ENCODE measurements at regions of chr11 and their contacts with region 1.

Region 1: DNA sequence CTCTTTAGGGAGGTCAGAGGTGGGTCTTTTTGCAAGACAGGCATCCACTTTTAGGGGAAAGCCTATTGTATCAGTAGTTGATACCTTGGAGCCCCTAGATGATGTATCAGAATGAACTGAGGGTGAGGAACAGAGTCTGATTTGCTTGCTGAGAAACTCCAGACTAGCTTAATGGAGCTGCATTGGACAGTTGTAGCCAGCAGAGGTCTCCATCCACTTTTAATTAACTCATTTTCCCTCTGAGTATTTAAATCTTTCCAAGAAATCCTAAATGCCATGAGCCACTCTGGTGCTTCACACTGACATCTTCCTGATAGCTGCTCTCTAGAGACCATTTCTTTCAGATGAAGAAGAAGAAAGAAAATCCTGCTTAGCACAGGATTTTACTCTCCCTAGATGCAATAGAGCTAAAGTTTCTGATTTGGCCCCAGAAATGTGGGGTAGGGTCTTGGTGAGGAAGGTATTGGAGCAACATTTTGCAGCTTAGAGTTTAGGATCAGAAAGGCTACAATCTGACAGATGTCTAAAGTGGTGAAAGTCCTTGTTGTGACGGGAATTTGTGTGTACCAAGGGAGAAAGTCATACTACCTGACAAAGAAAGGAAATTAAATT is 38.0 kb downstream of the EXT2 start:
- DNase-seq: no peak
- H3K4me3 ChIP-seq: no peak overlapping the region
- CTCF ChIP-seq: peak; percentile 54

Region 2: GRCh38 chr11:43992834-43993637 is 140.4 kb before region 1 on chr11:
- CTCF ChIA-PET with region 1: no interaction called
- POLR2A ChIA-PET with region 1: no interaction called
- DNase-seq: no peak
- H3K4me3 ChIP-seq: peak overlapping the region; percentile 8
- CTCF ChIP-seq: no peak

Region 3: GRCh38 chr11:44120169-44120568 is 13.3 kb before region 1 on chr11:
- CTCF ChIA-PET with region 1: interaction called, 53 read pairs
- POLR2A ChIA-PET with region 1: no interaction called
- DNase-seq: no peak
- H3K4me3 ChIP-seq: no peak overlapping the region
- CTCF ChIP-seq: peak; percentile 20

Region 4: GRCh38 chr11:44159848-44160721 is 26.6 kb after region 1 on chr11:
- CTCF ChIA-PET with region 1: interaction called, 13 read pairs
- POLR2A ChIA-PET with region 1: no interaction called
- DNase-seq: no peak
- H3K4me3 ChIP-seq: no peak overlapping the region
- CTCF ChIP-seq: no peak

Region 5: DNA sequence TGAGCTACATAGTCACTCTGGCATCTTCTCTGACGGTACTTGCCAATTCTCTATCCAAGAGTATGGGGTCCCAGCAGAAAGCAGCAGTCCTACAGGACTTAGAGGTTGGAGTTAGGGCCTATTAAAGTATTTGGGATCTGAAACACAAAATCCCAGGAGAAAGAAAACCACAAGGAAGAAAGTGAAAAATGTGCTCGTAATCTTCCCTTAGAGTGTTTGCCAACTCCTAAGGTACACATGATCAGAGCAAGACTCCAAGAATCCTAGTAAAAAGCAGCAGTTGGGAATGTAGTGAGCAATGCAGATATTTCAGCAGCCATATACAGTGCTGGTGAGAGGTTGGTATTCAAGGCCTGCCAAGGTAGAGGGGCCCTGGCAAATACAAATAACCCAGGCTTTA is 33.6 kb after region 1 on chr11:
- CTCF ChIA-PET with region 1: interaction called, 13 read pairs
- POLR2A ChIA-PET with region 1: no interaction called
- DNase-seq: no peak
- H3K4me3 ChIP-seq: no peak overlapping the region
- CTCF ChIP-seq: no peak

Region 6: GRCh38 chr11:44178381-44178780 is 44.9 kb after region 1 on chr11:
- CTCF ChIA-PET with region 1: interaction called, 21 read pairs
- POLR2A ChIA-PET with region 1: no interaction called
- DNase-seq: peak; percentile 59
- H3K4me3 ChIP-seq: no peak overlapping the region
- CTCF ChIP-seq: peak; percentile 40

Region 7: DNA sequence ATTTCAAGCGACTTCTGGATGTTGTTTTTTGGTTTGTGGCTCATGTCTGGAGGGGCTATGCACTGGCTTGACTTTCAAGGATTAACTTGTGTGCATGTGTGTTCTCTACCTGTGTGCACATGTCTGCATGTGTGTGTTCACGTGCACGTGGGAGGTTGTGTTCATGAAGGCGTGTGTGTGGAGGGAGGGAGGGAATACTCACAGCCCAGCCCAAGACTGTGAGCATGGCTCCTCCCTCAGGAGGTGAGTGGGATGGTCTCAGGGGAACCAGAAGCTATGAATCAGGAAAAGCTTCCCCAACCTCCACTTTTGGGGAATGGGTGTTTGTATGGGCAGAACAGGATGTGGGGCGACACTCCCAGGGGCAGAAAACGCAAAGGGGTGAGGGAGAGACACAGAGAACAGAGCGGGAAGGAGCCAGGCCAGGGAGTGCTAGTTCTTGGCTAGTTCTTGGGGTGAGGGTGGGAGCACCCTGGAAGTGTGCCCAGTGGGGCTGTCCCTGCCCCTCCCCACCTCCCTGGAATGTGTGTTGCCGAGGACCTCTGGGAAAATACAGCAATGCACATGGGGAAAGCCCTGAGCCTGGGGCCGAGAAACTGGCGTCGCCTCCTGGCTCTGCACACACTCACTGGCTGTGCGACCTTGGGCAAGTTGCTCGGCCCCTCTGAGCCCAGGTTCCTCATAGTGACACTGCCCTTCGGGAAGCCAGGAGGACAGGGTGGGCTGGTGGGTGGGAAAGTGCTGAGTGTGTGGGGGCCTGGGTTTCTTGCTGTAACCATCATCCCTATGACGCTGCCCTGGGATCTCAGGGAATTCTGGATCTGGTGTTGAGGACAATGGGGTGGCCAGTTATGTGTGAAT is 193.4 kb after region 1 on chr11:
- CTCF ChIA-PET with region 1: interaction called, 27 read pairs
- POLR2A ChIA-PET with region 1: no interaction called
- DNase-seq: no peak
- H3K4me3 ChIP-seq: no peak overlapping the region
- CTCF ChIP-seq: peak; percentile 4

Measured in AG04449 (cell line).